B cell (primary cell): ENCODE measurements at regions of chr15 and their contacts with region 1.

Region 1: DNA sequence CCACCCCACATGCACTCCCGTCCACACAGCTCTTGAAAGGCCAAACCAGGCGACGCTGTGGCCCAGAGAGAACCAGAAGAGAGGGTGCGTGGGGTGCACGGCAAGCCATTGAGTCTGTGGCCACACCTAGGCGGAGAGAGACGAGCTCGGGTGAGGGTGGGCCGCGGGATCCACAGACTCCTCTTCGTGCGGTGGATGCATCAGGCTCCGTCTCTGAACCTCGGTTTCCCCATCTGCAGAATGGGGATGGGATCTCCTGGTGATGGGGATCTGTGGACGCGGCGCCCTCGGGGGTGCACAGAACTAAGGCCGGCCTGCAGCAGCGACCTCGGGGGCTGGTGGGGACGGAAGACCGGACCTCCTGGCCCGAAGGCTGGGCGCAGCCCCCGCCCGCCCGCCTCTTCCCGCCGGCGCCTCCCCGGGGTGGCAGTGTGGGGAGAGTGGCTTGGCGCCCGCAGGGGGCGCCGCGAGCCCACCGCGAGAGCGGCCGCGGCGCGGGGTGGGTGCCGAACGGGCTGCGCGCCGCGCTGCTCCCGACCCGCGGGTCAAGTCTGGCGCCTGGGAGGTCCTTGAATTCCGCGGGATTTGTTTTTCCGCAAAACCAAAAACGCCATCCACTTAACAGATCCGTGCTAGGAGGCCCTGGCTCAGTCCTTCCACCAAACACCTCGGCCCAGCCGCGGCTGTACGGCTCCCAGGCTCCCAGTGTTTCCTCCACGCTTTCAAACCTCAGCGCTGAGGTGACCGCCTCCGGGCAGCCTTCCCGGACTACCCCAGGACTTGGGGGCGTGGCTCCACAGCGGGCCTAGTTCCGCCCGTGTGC is 13.2 kb upstream of the ADPGK start:
- DNase-seq: peak; percentile 62
- ATAC-seq: peak; percentile 79
- H3K4me3 ChIP-seq: peak overlapping the region; percentile 44 to 58 (median 54)
- H3K4me3 Mint-ChIP-seq: peak overlapping the region; percentile 88
- H3K27ac ChIP-seq: no peak overlapping the region
- H3K27ac Mint-ChIP-seq: peak overlapping the region; percentile 56
- H3K4me1 ChIP-seq: peaks cover 9 to 11% of the 10 kb centered on the region in 2 donors
- H3K4me1 Mint-ChIP-seq: peaks cover 12% of the 10 kb centered on the region
- H3K27me3 ChIP-seq: peaks cover 0 to 26% (median 18%) of the 10 kb centered on the region in 4 experiments
- H3K27me3 Mint-ChIP-seq: peaks cover 51% of the 10 kb centered on the region
- CTCF ChIP-seq: peak; percentile 64

Region 2: GRCh38 chr15:72827226-72827625 is 30.5 kb after region 1 on chr15:
- CTCF ChIA-PET with region 1: no interaction called
- POLR2A ChIA-PET with region 1: no interaction called
- intact Hi-C with region 1: no loop called
- DNase-seq: no peak
- ATAC-seq: no peak
- H3K4me3 ChIP-seq: no peak overlapping the region
- H3K4me3 Mint-ChIP-seq: no peak overlapping the region
- H3K27ac ChIP-seq: no peak overlapping the region
- H3K27ac Mint-ChIP-seq: no peak overlapping the region
- H3K4me1 ChIP-seq: no peaks in the 10 kb centered on the region
- H3K4me1 Mint-ChIP-seq: no peaks in the 10 kb centered on the region
- H3K27me3 ChIP-seq: peaks cover 0 to 13% (median 3%) of the 10 kb centered on the region in 4 experiments
- H3K27me3 Mint-ChIP-seq: peaks cover 33% of the 10 kb centered on the region
- CTCF ChIP-seq: no peak

Region 3: DNA sequence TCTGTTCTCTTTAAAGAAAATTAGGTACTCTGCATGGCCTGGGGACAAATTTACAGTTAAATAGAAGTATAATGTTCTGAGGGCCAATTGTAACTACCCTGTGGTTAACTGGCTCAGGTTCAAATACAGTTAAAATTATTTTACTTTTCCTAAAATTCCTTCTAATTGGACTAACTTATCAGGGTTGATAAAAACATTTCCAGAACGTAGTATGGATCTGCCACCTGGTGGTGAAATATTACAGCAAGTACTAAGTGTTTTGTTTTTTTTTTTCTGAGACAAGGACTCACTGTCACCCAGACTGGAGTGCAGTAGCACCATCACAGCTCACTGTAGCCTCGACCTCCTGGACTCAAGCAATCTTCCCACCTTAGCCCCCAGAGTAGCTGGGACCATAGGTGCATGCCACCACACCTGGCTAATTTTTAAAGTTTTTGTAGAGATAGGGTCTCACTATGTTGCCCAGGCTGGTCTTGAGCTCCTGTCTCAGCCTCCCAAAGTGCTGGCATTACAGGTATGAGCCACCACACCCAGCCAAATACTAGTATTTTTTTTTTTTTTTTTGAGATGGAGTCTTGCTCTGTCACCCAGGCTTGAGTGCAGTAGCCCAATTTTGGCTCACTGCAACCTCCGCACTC is 284.7 kb after region 1 on chr15:
- CTCF ChIA-PET with region 1: interaction called, 5 read pairs
- POLR2A ChIA-PET with region 1: no interaction called
- intact Hi-C with region 1: loop called (anchors 1 kb)
- DNase-seq: peak; percentile 53
- ATAC-seq: no peak
- H3K4me3 ChIP-seq: no peak overlapping the region
- H3K4me3 Mint-ChIP-seq: no peak overlapping the region
- H3K27ac ChIP-seq: no peak overlapping the region
- H3K27ac Mint-ChIP-seq: no peak overlapping the region
- H3K4me1 ChIP-seq: no peaks in the 10 kb centered on the region
- H3K4me1 Mint-ChIP-seq: no peaks in the 10 kb centered on the region
- H3K27me3 ChIP-seq: peaks cover 0 to 4% (median 0%) of the 10 kb centered on the region in 4 experiments
- H3K27me3 Mint-ChIP-seq: peaks cover 12% of the 10 kb centered on the region
- CTCF ChIP-seq: peak; percentile 69

Region 4: DNA sequence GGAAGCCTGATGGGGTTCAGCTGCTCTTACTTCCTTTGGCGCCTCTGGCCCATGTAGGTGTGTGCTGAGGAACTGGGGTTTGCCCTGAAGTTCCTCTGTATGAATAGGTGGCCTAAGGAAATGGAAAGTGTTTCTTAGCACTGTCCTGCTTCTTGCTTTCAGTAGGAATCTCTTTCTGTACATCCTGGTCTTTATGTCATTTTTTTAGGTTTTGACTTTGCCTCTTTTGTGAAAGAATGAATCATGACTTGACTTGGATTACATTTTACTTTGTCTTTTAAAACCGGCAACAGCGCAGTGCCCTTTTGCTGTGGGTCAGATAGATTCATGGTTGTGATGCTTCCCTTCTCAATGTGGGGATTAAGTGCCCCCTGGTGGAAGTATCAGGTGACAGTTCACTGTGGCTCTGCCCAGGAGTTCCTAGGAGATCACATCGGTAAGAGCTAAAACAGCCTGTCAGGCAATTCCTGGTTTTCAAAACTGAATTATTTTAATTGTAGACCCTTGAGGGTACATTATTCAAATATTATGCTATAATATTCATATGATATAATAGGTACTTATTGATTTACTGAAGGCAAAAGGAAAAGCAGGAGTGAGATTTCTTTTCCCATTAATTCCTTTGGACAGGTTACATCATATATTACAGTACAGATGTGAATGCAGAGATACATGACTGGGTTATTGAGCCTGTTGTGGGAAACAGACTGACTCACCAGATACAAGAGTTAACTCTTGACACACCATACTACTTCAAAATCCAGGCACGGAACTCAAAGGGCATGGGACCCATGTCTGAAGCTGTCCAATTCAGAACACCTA is 476.7 kb after region 1 on chr15:
- CTCF ChIA-PET with region 1: no interaction called
- POLR2A ChIA-PET with region 1: no interaction called
- intact Hi-C with region 1: loop called (anchors 2 kb)
- DNase-seq: peak; percentile 53
- ATAC-seq: peak; percentile 45
- H3K4me3 ChIP-seq: no peak overlapping the region
- H3K4me3 Mint-ChIP-seq: no peak overlapping the region
- H3K27ac ChIP-seq: no peak overlapping the region
- H3K27ac Mint-ChIP-seq: no peak overlapping the region
- H3K4me1 ChIP-seq: peaks cover 0 to 3% of the 10 kb centered on the region in 2 donors
- H3K4me1 Mint-ChIP-seq: peaks cover 3% of the 10 kb centered on the region
- H3K27me3 ChIP-seq: no peaks in the 10 kb centered on the region
- H3K27me3 Mint-ChIP-seq: peaks cover 10% of the 10 kb centered on the region
- CTCF ChIP-seq: peak; percentile 87

Region 5: GRCh38 chr15:73284090-73284716 is 487.5 kb after region 1 on chr15:
- CTCF ChIA-PET with region 1: no interaction called
- POLR2A ChIA-PET with region 1: no interaction called
- intact Hi-C with region 1: no loop called
- DNase-seq: peak; percentile 13
- ATAC-seq: no peak
- H3K4me3 ChIP-seq: no peak overlapping the region
- H3K4me3 Mint-ChIP-seq: no peak overlapping the region
- H3K27ac ChIP-seq: no peak overlapping the region
- H3K27ac Mint-ChIP-seq: no peak overlapping the region
- H3K4me1 ChIP-seq: peaks cover 10 to 22% of the 10 kb centered on the region in 2 donors
- H3K4me1 Mint-ChIP-seq: peaks cover 23% of the 10 kb centered on the region
- H3K27me3 ChIP-seq: no peaks in the 10 kb centered on the region
- H3K27me3 Mint-ChIP-seq: no peaks in the 10 kb centered on the region
- CTCF ChIP-seq: peak; percentile 20